ENCODE measurements at regions of chr22 and their contacts with region 1.

Region 1: GRCh38 chr22:40950962-40951794 is at the start of gene RBX1:
- DNase-seq: peak; percentile 98
- ATAC-seq: peak; percentile 87
- H3K4me3 Mint-ChIP-seq: peak within 1 kb of the TSS; percentile 100
- H3K27ac Mint-ChIP-seq: peak within 1 kb of the TSS; percentile 99
- H3K4me1 Mint-ChIP-seq: peaks cover 11% of the 10 kb centered on the region
- H3K27me3 Mint-ChIP-seq: no peaks in the 10 kb centered on the region; the same call in 1 of the 2 replicates
- CTCF ChIP-seq: no peak
- total RNA-seq, gene RBX1: 68.2 to 70.8 TPM (median 70.3 TPM) in 3 replicates

Region 2: GRCh38 chr22:40922484-40923303 is 28.5 kb before region 1 on chr22:
- CTCF ChIA-PET with region 1: interaction called, 28 read pairs
- POLR2A ChIA-PET with region 1: interaction called, 4 read pairs
- DNase-seq: no peak
- ATAC-seq: no peak
- H3K4me3 Mint-ChIP-seq: no peak overlapping the region
- H3K27ac Mint-ChIP-seq: no peak overlapping the region; the same call in 1 of the 2 replicates
- H3K4me1 Mint-ChIP-seq: no peaks in the 10 kb centered on the region
- H3K27me3 Mint-ChIP-seq: no peaks in the 10 kb centered on the region
- CTCF ChIP-seq: peak; percentile 59

Region 3: GRCh38 chr22:41022470-41023298 is 71.5 kb after region 1 on chr22:
- CTCF ChIA-PET with region 1: interaction called, 8 read pairs
- POLR2A ChIA-PET with region 1: interaction called, 31 read pairs
- DNase-seq: peak; percentile 93
- ATAC-seq: peak; percentile 81
- H3K4me3 Mint-ChIP-seq: peak overlapping the region; percentile 51
- H3K27ac Mint-ChIP-seq: peak overlapping the region; percentile 63; the same call in 1 of the 2 replicates
- H3K4me1 Mint-ChIP-seq: peaks cover 21% of the 10 kb centered on the region
- H3K27me3 Mint-ChIP-seq: peaks cover 7% of the 10 kb centered on the region
- CTCF ChIP-seq: no peak

Region 4: GRCh38 chr22:41036924-41037323 is 85.7 kb after region 1 on chr22:
- CTCF ChIA-PET with region 1: no interaction called
- POLR2A ChIA-PET with region 1: interaction called, 10 read pairs
- DNase-seq: no peak
- ATAC-seq: no peak
- H3K4me3 Mint-ChIP-seq: no peak overlapping the region
- H3K27ac Mint-ChIP-seq: no peak overlapping the region; the same call in 1 of the 2 replicates
- H3K4me1 Mint-ChIP-seq: no peaks in the 10 kb centered on the region
- H3K27me3 Mint-ChIP-seq: no peaks in the 10 kb centered on the region; the same call in 1 of the 2 replicates
- CTCF ChIP-seq: no peak

Region 5: DNA sequence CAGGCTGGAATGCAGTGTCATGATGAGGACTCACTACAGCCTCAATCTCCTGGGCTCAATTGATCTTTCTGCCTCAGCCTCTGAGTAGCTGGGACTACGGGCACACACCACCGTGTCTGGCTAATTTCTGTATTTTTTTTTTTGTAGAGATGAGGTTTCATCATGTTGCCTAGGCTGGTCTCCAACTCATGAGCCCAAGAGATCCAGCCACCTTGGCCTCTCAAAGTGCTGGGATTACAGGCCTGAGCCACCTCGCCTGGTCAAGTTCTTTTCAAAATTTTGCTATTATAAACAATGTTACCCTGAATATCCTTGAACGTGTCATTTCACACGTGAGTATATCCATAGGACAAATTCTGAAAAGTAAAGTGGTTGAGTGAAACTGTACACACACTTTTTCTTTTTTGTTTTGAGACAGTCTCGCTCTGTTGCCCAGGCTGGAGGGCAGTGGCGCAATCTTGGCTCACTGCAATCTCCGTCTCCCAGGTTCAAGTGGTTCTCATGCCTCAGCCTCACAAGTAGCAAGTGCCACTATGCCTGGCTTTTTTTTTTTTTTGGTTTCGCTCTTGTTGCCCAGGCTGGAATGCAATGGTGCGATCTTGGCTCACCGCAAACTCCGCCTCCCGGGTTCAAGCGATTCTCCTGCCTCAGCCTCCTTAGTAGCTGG is 119.6 kb after region 1 on chr22:
- CTCF ChIA-PET with region 1: no interaction called
- POLR2A ChIA-PET with region 1: no interaction called
- DNase-seq: no peak
- ATAC-seq: no peak
- H3K4me3 Mint-ChIP-seq: no peak overlapping the region
- H3K27ac Mint-ChIP-seq: no peak overlapping the region
- H3K4me1 Mint-ChIP-seq: no peaks in the 10 kb centered on the region
- H3K27me3 Mint-ChIP-seq: no peaks in the 10 kb centered on the region; the same call in 1 of the 2 replicates
- CTCF ChIP-seq: no peak

Region 6: GRCh38 chr22:41091132-41092022 is 140.2 kb after region 1 on chr22:
- CTCF ChIA-PET with region 1: no interaction called
- POLR2A ChIA-PET with region 1: interaction called, 30 read pairs
- DNase-seq: peak; percentile 99
- ATAC-seq: peak; percentile 94
- H3K4me3 Mint-ChIP-seq: peak overlapping the region; percentile 91
- H3K27ac Mint-ChIP-seq: peak overlapping the region; percentile 99
- H3K4me1 Mint-ChIP-seq: peaks cover 32% of the 10 kb centered on the region
- H3K27me3 Mint-ChIP-seq: no peaks in the 10 kb centered on the region
- CTCF ChIP-seq: no peak

Measured in WTC11 (cell line).